ENCODE measurements at regions of chr6 and their contacts with region 1.

Region 1: GRCh38 chr6:33126101-33126714 is 50.4 kb downstream of the HLA-DPB1 start:
- DNase-seq: peak; percentile 85
- H3K4me3 Mint-ChIP-seq: no peak overlapping the region
- H3K27ac Mint-ChIP-seq: no peak overlapping the region
- H3K4me1 Mint-ChIP-seq: no peaks in the 10 kb centered on the region
- H3K27me3 Mint-ChIP-seq: peaks cover 98% of the 10 kb centered on the region
- CTCF ChIP-seq: peak; percentile 69

Region 2: DNA sequence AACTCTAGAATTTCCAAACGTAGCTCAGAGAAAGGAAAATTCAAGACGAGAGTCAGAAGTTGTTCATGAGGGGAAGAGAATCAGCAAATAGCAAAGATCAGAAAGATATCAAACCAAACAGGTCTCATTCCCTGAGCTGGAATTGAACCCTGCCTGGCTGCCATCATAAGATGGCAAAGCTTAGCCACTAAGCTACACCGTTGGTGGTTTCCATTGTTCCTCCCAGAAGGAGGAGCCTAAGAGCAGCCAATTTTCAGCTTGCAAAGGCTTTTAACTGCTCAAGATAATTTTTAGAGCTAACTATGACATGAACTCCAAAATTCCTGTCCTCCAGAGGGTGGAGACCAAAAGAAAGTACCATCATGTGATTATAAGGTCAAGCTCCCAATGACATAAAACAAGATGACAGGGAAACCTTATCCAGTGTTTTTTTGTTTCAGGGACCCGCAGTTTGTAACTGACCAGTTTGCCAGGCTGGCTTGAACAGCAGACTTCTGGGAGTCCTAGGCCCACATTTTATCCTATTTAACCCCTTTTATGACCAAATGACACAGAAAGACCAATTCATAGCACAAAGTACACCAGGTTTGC is 10.2 kb after region 1 on chr6:
- CTCF ChIA-PET with region 1: interaction called, 13 read pairs
- intact Hi-C with region 1: no loop called
- DNase-seq: no peak
- H3K4me3 Mint-ChIP-seq: no peak overlapping the region
- H3K27ac Mint-ChIP-seq: no peak overlapping the region
- H3K4me1 Mint-ChIP-seq: no peaks in the 10 kb centered on the region
- H3K27me3 Mint-ChIP-seq: peaks cover 63% of the 10 kb centered on the region
- CTCF ChIP-seq: no peak

Region 3: GRCh38 chr6:33288921-33289748 is 162.9 kb after region 1 on chr6 and contains the starts of genes PFDN6 and WDR46:
- CTCF ChIA-PET with region 1: no interaction called
- intact Hi-C with region 1: no loop called
- DNase-seq: peak; percentile 82
- H3K4me3 Mint-ChIP-seq: peak within 1 kb of the TSS; percentile 81
- H3K27ac Mint-ChIP-seq: peak within 1 kb of the TSS; percentile 69
- H3K4me1 Mint-ChIP-seq: peaks cover 39% of the 10 kb centered on the region
- H3K27me3 Mint-ChIP-seq: no peaks in the 10 kb centered on the region
- CTCF ChIP-seq: no peak
- total RNA-seq, gene PFDN6: 141 and 168 TPM in 2 replicates
- total RNA-seq, gene WDR46: 124 and 125 TPM in 2 replicates